PC-9 (cell line): ENCODE measurements at regions of chr13 and their contacts with region 1.

Region 1: GRCh38 chr13:23690668-23691067 is 120.5 kb downstream of the TNFRSF19 start:
- DNase-seq: no peak
- H3K4me3 ChIP-seq: no peak overlapping the region
- H3K27ac ChIP-seq: no peak overlapping the region
- H3K4me1 ChIP-seq: no peaks in the 10 kb centered on the region
- H3K27me3 ChIP-seq: peaks cover 10% of the 10 kb centered on the region; the same call in 1 of the 2 replicates
- CTCF ChIP-seq: no peak

Region 2: GRCh38 chr13:23810685-23811240 is 120.1 kb after region 1 on chr13:
- CTCF ChIA-PET with region 1: no interaction called
- POLR2A ChIA-PET with region 1: interaction called, 13 read pairs
- intact Hi-C with region 1: no loop called
- DNase-seq: no peak
- H3K4me3 ChIP-seq: no peak overlapping the region
- H3K27ac ChIP-seq: no peak overlapping the region
- H3K4me1 ChIP-seq: peaks cover 14% of the 10 kb centered on the region
- H3K27me3 ChIP-seq: no peaks in the 10 kb centered on the region
- CTCF ChIP-seq: no peak